ENCODE measurements at regions of chr9 and their contacts with region 1.

Region 1: DNA sequence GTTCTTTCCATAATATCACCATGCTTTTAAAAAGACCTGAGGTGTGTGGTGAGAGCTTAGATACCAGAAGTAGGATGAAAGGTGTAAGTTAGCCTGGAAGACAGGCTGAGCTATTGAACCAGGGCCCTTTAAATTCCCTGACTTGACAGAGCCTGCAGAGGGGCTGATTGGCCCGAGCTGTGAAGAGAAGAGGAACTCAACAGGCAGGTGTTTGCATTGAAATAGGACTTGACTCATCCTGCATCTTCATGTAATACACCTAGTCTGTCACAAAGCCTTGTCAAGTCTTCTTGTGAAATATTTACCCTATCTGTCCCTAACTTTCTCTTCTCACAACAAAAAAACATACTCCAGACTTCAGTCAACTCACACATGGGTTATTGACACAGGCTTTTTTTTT is 16.6 kb upstream of the ANP32B start:
- DNase-seq: no peak
- H3K4me3 Mint-ChIP-seq: no peak overlapping the region
- H3K27ac Mint-ChIP-seq: no peak overlapping the region
- H3K4me1 Mint-ChIP-seq: no peaks in the 10 kb centered on the region
- H3K27me3 Mint-ChIP-seq: peaks cover 7% of the 10 kb centered on the region

Region 2: GRCh38 chr9:97570899-97571298 is 395.6 kb before region 1 on chr9:
- intact Hi-C with region 1: loop called (anchors 5 kb)
- DNase-seq: no peak
- H3K4me3 Mint-ChIP-seq: no peak overlapping the region
- H3K27ac Mint-ChIP-seq: no peak overlapping the region
- H3K4me1 Mint-ChIP-seq: peaks cover 14% of the 10 kb centered on the region
- H3K27me3 Mint-ChIP-seq: no peaks in the 10 kb centered on the region

Measured in activated T-helper 1 cell treated with anti-CD3 and anti-CD28 coated beads, Interleukin-12 subunit alpha, Interleukin-12 subunit beta, Interleukin-2, Interleukin-4 antibody, amounts not matched to agents 30 ng/mL and 10 ng/mL and 1 ng/mL, durations not matched to agents 14 hours and 24 hours and 36 hours (primary cell).